ENCODE measurements at regions of chr16 and their contacts with region 1.

Region 1: DNA sequence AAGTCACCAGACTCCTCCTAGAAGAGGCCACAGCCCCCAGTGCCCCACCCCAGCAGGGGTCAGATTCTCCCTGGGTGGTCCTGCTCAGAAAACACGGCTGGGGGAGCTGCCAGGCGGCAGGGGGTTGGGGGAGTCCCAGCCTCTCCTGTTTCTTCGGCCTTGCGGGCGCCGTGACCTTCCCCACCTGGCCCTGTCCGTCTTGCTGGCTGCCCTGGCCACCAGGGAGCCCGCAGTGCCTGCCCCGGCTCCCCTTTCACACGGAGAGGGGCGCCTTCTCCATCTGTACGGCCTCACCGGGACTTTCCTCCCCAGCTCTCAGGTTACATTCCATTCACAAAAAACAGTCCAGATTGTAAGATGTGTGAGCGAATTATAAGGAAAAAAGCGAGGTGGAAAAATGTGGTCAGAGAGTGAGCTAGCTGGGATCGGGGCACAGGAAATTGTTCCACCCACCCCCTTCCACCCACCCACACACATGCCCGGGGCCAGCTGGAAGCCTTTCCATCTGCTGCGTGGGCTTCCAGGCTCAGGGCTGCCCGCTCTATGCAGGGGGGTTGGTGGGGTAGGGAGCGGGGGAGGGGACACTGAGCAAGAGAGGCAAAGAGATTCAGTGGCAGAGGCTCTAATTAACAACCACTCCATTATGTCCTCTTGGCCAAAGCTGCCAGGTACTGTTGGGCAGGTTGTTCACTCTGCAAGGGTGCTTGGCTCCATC is 14.6 kb upstream of the CIBAR2 start:
- DNase-seq: no peak
- ATAC-seq: peak; percentile 37
- H3K4me3 ChIP-seq: no peak overlapping the region
- H3K27ac ChIP-seq: peak overlapping the region; percentile 69
- H3K4me1 ChIP-seq: peaks cover 15% of the 10 kb centered on the region
- H3K27me3 ChIP-seq: no peaks in the 10 kb centered on the region
- CTCF ChIP-seq: no peak

Region 2: DNA sequence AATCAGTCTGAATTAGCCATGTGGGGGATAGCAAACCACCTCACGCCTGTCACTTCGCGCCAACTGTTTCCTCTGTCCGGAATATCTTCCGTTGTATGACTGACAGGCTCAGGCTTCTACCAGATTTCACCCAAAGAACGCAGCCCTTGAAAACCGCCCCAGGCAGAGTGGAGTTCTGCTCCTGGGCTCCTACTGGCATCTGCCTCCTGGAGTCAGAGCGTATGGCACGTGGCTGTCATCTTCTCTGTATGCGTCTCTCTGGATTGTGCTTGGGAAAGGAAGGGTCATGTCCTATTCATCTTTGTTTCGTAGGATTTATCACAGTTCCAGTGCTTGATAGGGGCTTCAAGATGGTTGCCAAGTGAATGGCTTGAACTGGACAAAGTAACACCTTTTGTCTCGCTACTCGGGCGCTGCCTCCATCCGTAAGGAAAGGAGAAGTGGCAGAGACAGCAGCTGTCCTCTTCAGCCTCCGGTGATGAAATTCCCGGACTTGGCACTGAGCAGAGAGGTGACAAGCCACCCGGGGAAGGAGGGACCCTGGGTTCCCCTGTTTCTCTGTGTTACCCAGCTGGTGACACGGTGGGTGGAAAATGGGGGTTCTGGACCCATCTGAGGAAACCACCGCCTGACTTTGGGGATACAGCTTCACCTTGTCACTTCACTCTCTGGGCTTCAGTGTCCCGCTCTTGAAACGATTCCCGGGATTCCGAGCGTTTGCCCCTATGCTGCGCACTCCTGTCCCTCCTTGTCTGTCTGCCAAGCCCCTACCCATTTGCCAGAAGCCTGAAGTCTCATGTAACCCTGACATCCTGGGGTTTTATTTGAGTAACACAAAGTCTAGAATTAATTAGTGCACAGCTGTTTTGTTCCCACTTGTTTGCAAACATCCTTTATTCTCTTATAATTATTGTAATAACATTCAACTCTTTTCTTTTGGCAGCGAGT is 85.4 kb before region 1 on chr16:
- CTCF ChIA-PET with region 1: no interaction called
- POLR2A ChIA-PET with region 1: interaction called, 13 read pairs
- in situ Hi-C with region 1: no loop called
- intact Hi-C with region 1: no loop called
- DNase-seq: no peak
- ATAC-seq: no peak
- H3K4me3 ChIP-seq: no peak overlapping the region
- H3K27ac ChIP-seq: no peak overlapping the region
- H3K4me1 ChIP-seq: no peaks in the 10 kb centered on the region
- H3K27me3 ChIP-seq: no peaks in the 10 kb centered on the region
- CTCF ChIP-seq: no peak

Measured in Panc1 (cell line).